Activated T-helper 2 cell treated with anti-CD3 and anti-CD28 coated beads, Interferon-gamma antibody, Interleukin-2, Interleukin-4, amounts not matched to agents 10 μg/mL and 5 μg/mL and 100 μg/mL, durations not matched to agents 14 hours and 24 hours and 36 hours (primary cell): ENCODE measurements at regions of chr3 and their contacts with region 1.

Region 1: GRCh38 chr3:9224490-9224889 is 25.0 kb downstream of the SRGAP3 start:
- DNase-seq: peak; percentile 34
- H3K4me3 Mint-ChIP-seq: peak overlapping the region; percentile 43
- H3K27ac Mint-ChIP-seq: no peak overlapping the region
- H3K4me1 Mint-ChIP-seq: peaks cover 61% of the 10 kb centered on the region
- H3K27me3 Mint-ChIP-seq: peaks cover 2% of the 10 kb centered on the region

Region 2: GRCh38 chr3:9168241-9168741 is 56.2 kb before region 1 on chr3:
- intact Hi-C with region 1: loop called (anchors 1 kb)
- DNase-seq: peak; percentile 77
- H3K4me3 Mint-ChIP-seq: no peak overlapping the region
- H3K27ac Mint-ChIP-seq: no peak overlapping the region
- H3K4me1 Mint-ChIP-seq: peaks cover 27% of the 10 kb centered on the region
- H3K27me3 Mint-ChIP-seq: no peaks in the 10 kb centered on the region

Region 3: GRCh38 chr3:9178697-9179096 is 45.8 kb before region 1 on chr3:
- intact Hi-C with region 1: no loop called
- DNase-seq: no peak
- H3K4me3 Mint-ChIP-seq: peak overlapping the region; percentile 5
- H3K27ac Mint-ChIP-seq: no peak overlapping the region
- H3K4me1 Mint-ChIP-seq: peaks cover 42% of the 10 kb centered on the region
- H3K27me3 Mint-ChIP-seq: peaks cover 2% of the 10 kb centered on the region

Region 4: GRCh38 chr3:9205345-9206143 is 18.9 kb before region 1 on chr3:
- intact Hi-C with region 1: loop called (anchors 1 kb)
- DNase-seq: no peak
- H3K4me3 Mint-ChIP-seq: no peak overlapping the region
- H3K27ac Mint-ChIP-seq: no peak overlapping the region
- H3K4me1 Mint-ChIP-seq: peaks cover 10% of the 10 kb centered on the region
- H3K27me3 Mint-ChIP-seq: peaks cover 2% of the 10 kb centered on the region

Region 5: GRCh38 chr3:9249273-9250192 is 25.0 kb after region 1 on chr3 and contains the start of gene SRGAP3:
- intact Hi-C with region 1: loop called (anchors 1 kb)
- DNase-seq: peak; percentile 79
- H3K4me3 Mint-ChIP-seq: peak within 1 kb of the TSS; percentile 85
- H3K27ac Mint-ChIP-seq: no peak within 1 kb of the TSS
- H3K4me1 Mint-ChIP-seq: peaks cover 25% of the 10 kb centered on the region
- H3K27me3 Mint-ChIP-seq: peaks cover 13% of the 10 kb centered on the region
- total RNA-seq, gene SRGAP3: 0.71 and 0.85 TPM in 2 replicates